ENCODE measurements at regions of chr3 and their contacts with region 1.

Region 1: DNA sequence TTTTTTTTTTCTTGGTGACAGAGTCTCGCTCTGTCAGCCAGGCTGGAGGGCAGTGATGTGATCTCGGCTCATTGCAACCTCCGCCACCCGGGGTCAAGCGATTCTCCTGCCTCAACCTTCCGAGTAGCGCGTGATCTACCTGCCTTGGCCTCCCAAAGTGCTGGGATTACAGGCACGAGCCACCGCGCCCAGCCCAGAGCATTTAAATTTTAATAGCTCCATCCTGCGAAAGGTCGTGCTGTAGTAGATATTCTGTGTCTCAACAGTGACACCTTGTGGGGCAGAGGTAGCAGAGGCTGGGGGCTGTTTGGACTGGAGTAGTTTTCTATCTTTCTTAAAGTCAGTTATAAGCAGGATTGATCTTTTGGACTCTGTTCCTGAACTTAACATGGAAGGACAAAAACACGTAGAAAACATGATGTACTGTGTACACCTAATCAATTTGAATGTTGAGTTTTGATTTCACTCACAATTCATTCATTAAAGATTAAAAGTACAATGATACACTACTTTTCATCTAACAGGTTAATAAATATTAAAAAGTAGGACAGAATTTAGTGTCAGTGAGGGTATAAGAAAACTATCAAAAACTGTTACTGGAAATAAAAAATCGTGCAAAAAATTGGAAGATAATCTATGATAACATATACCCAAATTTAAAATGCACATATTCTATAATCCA is 11.0 kb upstream of the PDCD6IP start:
- DNase-seq: peak; percentile 71
- H3K4me3 ChIP-seq: peak overlapping the region; percentile 7 to 17 (median 8)
- H3K27ac ChIP-seq: no peak overlapping the region
- H3K4me1 ChIP-seq: peaks cover 4% of the 10 kb centered on the region
- H3K27me3 ChIP-seq: no peaks in the 10 kb centered on the region
- CTCF ChIP-seq: peak; percentile 73 to 74
- POLR2A ChIP-seq: no peak

Region 2: DNA sequence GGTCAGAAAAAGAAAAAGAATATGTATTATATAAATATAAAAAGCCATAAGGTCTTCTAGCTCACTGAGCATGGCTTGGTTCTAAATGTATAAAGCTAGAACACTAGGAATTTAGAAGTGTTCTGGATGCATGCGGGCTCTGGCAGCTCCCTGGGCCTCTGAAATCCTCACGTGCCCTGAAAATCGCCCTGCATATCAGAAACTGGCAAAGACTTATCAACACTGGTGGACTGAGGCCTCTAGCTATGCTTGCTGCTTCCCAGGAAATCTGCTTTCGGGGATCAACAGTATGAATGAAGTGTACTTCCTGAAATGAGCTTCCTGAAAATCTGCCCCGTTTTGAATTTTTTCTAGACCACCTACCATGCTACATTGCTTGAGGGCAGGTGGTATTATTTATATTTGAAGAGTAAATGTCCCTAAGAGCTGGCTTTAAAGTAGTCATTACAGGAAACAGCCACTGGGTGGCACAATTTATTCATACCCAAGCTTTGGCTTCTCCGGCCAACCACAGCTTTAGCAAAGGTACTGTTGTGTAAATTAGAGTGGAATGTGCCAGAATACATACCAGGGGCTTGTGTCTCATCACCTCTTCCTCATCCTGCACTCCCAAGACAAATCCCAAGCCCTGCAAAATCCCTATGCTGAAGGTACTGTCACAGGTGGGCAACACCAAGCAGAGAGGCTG is 656.0 kb before region 1 on chr3:
- CTCF ChIA-PET with region 1: interaction called, 29 read pairs
- POLR2A ChIA-PET with region 1: no interaction called
- dilution Hi-C with region 1: no loop called
- intact Hi-C with region 1: loop called (anchors 1 kb)
- DNase-seq: peak; percentile 76
- H3K4me3 ChIP-seq: no peak overlapping the region
- H3K27ac ChIP-seq: no peak overlapping the region
- H3K4me1 ChIP-seq: peaks cover 9% of the 10 kb centered on the region
- H3K27me3 ChIP-seq: no peaks in the 10 kb centered on the region
- CTCF ChIP-seq: peak; percentile 51 to 62
- POLR2A ChIP-seq: no peak

Region 3: GRCh38 chr3:33420966-33421365 is 366.5 kb before region 1 on chr3:
- CTCF ChIA-PET with region 1: interaction called, 15 read pairs
- POLR2A ChIA-PET with region 1: no interaction called
- dilution Hi-C with region 1: no loop called
- intact Hi-C with region 1: no loop called
- DNase-seq: no peak
- H3K4me3 ChIP-seq: no peak overlapping the region
- H3K27ac ChIP-seq: no peak overlapping the region
- H3K4me1 ChIP-seq: no peaks in the 10 kb centered on the region
- H3K27me3 ChIP-seq: no peaks in the 10 kb centered on the region
- CTCF ChIP-seq: no peak
- POLR2A ChIP-seq: no peak

Region 4: DNA sequence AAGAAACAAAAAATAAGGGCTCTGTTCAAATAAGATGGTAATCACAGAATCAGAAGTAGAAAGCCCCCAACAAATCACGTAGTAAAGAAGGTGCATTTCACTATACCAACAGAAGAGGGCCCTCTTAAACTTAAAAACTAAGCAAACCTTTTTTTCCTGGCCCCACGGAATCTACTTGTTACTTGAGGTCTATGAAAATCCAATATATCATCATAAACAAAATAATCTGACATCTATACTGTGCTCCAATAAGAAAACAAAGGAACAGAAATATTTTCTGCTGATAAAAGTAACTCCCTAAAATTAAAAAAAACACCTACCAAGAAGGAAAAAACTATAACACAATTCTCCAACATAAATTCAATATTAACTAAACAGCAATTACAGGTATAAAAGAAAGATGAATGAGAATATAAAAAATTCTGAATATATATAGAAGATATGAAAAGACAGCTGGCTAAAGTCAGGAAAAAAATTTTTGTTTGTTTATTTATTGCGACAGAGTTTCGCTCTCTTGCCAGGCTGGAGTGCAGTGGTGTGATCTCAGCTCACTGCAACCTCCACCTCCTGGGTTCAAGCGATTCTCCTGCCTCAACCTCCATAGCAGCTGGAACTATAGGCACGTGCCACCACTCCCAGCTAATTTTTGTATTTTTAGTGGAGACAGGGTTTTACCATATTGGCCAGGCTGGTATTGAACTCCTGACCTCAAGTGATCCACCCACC is 151.2 kb before region 1 on chr3:
- CTCF ChIA-PET with region 1: interaction called, 99 read pairs
- POLR2A ChIA-PET with region 1: interaction called, 4 read pairs
- dilution Hi-C with region 1: no loop called
- intact Hi-C with region 1: loop called (anchors 1 kb)
- DNase-seq: peak; percentile 70
- H3K4me3 ChIP-seq: no peak overlapping the region
- H3K27ac ChIP-seq: no peak overlapping the region
- H3K4me1 ChIP-seq: no peaks in the 10 kb centered on the region
- H3K27me3 ChIP-seq: no peaks in the 10 kb centered on the region
- CTCF ChIP-seq: peak; percentile 33 to 42
- POLR2A ChIP-seq: no peak

Region 5: DNA sequence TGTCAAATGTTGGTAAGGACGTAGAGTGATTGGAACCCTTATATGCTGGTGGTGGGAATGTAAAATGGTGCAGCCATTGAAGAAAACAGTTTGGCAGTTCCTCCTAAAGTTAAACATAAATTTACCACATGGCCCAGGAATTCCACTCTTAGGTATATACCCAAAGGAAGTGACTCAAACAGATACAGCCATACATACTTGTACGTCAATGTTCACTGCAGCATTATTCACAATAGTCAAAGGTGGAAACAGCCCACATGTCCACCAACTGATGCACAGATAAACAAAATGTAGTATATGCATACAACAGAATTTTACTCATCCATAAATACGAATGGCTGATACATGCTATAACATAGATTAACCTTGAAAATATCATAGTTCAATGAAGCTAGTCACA is 82.6 kb before region 1 on chr3:
- CTCF ChIA-PET with region 1: no interaction called
- POLR2A ChIA-PET with region 1: no interaction called
- dilution Hi-C with region 1: no loop called
- intact Hi-C with region 1: no loop called
- DNase-seq: no peak
- H3K4me3 ChIP-seq: no peak overlapping the region
- H3K27ac ChIP-seq: no peak overlapping the region
- H3K4me1 ChIP-seq: no peaks in the 10 kb centered on the region
- H3K27me3 ChIP-seq: no peaks in the 10 kb centered on the region
- CTCF ChIP-seq: no peak
- POLR2A ChIP-seq: no peak

Region 6: DNA sequence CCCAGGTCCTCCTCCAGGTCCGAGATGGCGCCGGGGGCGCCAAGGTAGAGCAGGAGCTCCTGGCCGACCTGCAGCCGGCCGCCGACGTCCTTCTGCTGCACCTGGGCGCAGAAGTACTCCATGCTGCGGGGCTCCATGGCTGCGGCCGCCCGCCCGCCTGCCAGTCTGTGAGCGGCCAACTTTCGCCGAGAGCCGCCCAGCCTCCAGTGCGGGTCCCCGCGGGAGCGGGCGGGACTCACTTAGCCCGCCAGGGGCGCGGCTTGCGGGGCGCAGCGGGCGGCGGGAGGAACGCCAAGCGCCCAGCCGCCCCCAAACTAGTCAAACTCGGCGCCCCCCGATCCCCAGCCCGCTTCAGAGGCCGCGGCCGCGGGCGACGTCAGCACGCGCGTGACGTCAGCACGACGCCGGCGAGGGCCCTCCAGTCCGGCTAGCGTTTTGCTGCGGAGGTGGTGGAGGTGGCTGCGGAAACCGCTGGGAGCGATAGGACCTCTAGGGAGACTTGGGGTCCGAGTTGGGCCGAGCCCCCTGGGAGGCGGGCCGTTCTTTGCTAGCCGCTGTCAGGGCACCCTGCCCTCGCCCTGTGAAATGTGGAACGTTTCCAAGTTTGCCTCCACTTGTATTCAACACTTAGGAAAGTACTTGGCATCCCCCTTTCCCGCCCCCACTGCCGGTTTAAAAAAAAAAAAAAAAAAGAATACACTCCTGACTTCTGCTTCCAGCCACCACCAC is 69.4 kb before region 1 on chr3 and contains the start of gene CLASP2:
- CTCF ChIA-PET with region 1: interaction called, 11 read pairs
- POLR2A ChIA-PET with region 1: no interaction called
- dilution Hi-C with region 1: no loop called
- intact Hi-C with region 1: no loop called
- DNase-seq: peak; percentile 91
- H3K4me3 ChIP-seq: peak within 1 kb of the TSS; percentile 67 to 94 (median 76)
- H3K27ac ChIP-seq: peak within 1 kb of the TSS; percentile 76
- H3K4me1 ChIP-seq: peaks cover 18% of the 10 kb centered on the region
- H3K27me3 ChIP-seq: no peaks in the 10 kb centered on the region
- CTCF ChIP-seq: no peak
- POLR2A ChIP-seq: peak; percentile 88
- total RNA-seq, gene CLASP2: 55.0 and 62.9 TPM in 2 replicates